Lower lobe of right lung (tissue), 2 donors: ENCODE measurements at regions of chr16 and their contacts with region 1.

Region 1: GRCh38 chr16:58481931-58482330 is 18.0 kb upstream of the NDRG4 start:
- DNase-seq: no peak
- ATAC-seq: no peak
- H3K4me3 ChIP-seq: no peak overlapping the region
- H3K27ac ChIP-seq: no peak overlapping the region
- H3K4me1 ChIP-seq: no peaks in the 10 kb centered on the region
- H3K27me3 ChIP-seq: no peaks in the 10 kb centered on the region
- CTCF ChIP-seq: no peak

Region 2: DNA sequence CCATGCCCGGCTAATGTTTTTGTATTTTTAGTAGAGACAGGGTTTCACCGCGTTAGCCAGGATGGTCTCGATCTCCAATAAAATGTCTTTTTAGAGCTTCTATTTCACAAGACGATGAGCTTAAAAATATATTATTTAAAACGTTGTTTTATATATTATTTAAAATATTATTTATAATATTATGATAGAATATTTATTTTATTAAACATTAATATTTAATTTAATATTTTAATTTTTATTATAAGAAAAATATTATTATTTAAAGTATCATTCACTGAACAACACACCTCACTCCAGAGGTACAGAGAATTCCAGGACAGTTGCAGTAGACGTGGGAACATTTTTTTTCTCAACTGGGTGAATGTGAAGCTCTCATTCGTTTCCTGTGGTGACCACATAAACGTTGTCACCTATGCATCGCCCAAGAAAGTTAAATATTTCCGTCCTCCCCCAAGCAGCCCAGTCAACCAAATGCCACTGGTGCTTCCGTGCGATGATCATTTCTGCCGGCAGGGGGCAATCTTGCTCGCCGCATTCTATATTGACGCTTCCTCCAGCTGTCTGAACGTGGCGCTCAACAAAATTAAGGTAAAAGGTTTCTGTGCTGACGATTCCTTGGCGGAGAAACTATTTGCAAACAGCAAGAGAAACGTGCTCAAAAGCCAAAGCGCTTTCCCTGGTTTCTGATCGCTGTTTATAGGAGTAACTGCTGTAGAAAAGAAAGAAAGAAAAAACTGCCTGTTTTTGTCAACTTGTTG is 145.4 kb before region 1 on chr16:
- intact Hi-C with region 1: loop called (anchors 5 kb)
- DNase-seq: peak; percentile 83
- ATAC-seq: peak; percentile 81 to 88
- H3K4me3 ChIP-seq: peak overlapping the region; percentile 30
- H3K27ac ChIP-seq: no peak overlapping the region
- H3K4me1 ChIP-seq: peaks cover 6% of the 10 kb centered on the region
- H3K27me3 ChIP-seq: no peaks in the 10 kb centered on the region
- CTCF ChIP-seq: peak; percentile 97

Region 3: DNA sequence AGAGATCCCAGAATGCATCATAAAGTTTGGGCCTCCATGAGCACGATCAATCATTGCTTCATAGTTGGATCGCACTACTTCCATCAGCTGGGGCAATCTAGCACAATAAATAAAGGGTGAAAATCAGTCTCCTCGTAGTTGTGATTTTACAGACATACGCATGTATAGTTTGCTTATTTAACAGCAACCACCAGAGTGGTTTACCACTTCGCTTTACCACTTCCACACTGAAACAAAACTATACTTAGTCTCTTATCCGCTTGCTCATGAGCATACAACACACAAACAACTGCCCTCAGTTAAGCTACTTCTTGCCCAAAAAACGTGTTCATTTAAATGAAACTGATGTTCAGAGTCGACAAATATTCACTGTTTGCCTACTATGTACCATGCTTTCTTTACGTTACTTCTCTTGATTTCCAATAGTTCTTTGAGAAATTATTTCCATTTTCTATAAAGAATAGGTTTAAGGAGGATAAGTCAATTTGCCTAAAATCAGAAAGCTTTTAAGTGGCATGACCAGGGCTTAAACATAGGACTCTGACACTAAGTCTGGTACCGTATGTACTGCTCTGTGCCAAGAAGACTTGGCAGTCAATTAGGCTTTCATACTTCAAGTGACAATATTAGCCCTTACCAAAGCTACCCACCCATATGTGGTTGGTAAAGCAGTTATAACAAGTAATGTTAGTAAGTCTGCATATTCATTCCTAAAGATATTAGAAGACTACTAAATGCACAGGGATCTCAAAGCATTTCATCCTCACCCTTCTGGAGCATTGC is 55.4 kb after region 1 on chr16:
- intact Hi-C with region 1: no loop called
- DNase-seq: no peak
- ATAC-seq: no peak
- H3K4me3 ChIP-seq: no peak overlapping the region
- H3K27ac ChIP-seq: no peak overlapping the region
- H3K4me1 ChIP-seq: no peaks in the 10 kb centered on the region
- H3K27me3 ChIP-seq: no peaks in the 10 kb centered on the region
- CTCF ChIP-seq: no peak

Region 4: GRCh38 chr16:59859676-59860402 is 1377.9 kb after region 1 on chr16:
- intact Hi-C with region 1: no loop called
- DNase-seq: no peak
- ATAC-seq: no peak
- H3K4me3 ChIP-seq: no peak overlapping the region
- H3K27ac ChIP-seq: no peak overlapping the region
- H3K4me1 ChIP-seq: no peaks in the 10 kb centered on the region
- H3K27me3 ChIP-seq: no peaks in the 10 kb centered on the region
- CTCF ChIP-seq: no peak